ENCODE measurements at regions of chrX and their contacts with region 1.

Region 1: DNA sequence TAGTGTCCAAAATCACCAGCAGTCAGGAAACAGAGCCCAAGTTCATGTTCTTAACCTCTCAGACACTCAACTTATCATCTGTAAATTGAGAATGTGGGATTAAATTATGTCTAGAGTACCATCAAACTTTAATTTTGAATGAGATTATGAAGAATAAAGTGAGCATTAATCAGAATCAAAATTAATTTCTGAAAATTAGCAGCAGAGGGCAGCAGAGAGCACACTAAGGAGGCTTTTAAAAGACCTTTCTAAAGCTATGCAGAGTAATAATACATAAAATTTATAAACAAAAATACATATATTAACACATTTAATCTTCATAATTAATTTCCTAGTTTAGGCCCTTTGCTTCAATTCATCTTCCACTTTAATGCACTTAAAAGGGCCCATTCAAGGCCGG is 7.1 kb downstream of the TASL start:
- DNase-seq: no peak
- H3K4me3 Mint-ChIP-seq: no peak overlapping the region
- H3K27ac Mint-ChIP-seq: no peak overlapping the region
- H3K4me1 Mint-ChIP-seq: peaks cover 19% of the 10 kb centered on the region
- H3K27me3 Mint-ChIP-seq: no peaks in the 10 kb centered on the region

Region 2: GRCh38 chrX:29707088-29707487 is 863.4 kb before region 1 on chrX:
- CTCF ChIA-PET with region 1: no interaction called
- intact Hi-C with region 1: no loop called
- DNase-seq: no peak
- H3K4me3 Mint-ChIP-seq: no peak overlapping the region
- H3K27ac Mint-ChIP-seq: no peak overlapping the region
- H3K4me1 Mint-ChIP-seq: no peaks in the 10 kb centered on the region
- H3K27me3 Mint-ChIP-seq: no peaks in the 10 kb centered on the region

Region 3: DNA sequence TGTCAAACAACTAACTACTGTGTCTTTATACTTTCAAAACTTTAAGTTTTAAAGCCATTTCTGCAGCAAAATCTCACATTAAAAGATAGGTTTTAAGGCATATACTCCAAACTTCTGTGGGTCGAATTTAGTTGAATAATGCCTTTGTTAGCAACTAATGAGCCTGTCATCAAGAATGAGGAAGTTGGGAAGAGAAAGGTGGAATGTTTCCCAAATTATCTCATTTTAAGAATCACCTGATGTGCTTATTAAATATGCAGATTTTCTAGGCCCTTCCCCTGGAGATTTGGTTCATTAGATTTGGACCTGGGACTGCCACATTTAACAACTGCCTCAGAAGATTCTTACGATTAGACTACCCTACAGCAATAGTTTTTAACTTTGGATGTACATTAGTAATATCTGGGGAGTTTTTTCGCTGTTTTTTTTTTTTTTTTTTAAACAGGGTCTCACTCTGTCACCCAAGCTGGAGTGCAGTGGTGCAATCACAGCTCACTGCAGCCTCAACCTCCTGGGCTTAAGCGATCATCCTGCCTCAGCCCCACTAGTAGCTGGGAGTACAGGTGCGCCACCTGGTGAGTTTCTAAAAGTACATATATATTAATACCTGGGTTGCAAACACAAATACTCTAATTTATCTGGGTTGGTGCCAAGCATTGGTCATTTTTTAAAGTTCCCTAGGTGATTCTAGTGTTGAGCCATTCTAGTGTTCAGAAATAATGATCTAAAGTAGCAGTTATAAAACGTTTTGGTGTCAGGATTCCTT is 23.1 kb after region 1 on chrX:
- CTCF ChIA-PET with region 1: interaction called, 35 read pairs
- intact Hi-C with region 1: loop called (anchors 1 kb)
- DNase-seq: peak; percentile 48
- H3K4me3 Mint-ChIP-seq: no peak overlapping the region
- H3K27ac Mint-ChIP-seq: no peak overlapping the region
- H3K4me1 Mint-ChIP-seq: peaks cover 18% of the 10 kb centered on the region
- H3K27me3 Mint-ChIP-seq: no peaks in the 10 kb centered on the region

Region 4: DNA sequence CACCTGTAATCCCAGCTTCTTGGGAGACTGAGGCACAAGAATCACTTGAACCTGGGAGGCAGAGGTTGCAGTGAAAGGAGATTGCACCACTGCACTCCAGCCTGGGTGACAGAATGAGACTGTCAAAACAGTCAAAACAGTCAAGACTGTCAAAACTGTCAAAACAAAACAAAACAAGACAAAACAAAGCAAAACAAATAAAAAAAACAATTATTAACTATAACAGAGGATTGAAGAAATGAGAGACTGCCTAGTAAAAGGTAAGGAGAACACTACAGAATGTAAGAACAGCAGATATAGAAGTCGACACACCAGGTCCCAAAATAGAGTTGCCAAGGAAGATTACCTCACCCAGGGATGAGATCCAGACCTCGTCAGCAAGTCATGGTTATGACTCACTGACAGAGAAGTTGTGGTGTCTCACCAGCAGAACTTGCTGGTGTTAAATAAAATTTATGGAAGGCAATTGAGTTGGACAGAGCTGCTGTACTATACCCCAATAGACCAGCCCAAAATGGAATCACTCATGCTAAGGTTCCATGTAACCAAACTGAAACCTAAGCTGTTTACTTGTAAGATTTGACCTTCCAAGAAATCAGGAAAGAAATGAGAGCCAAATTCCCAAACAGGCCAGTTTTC is 50.6 kb after region 1 on chrX:
- CTCF ChIA-PET with region 1: interaction called, 4 read pairs
- intact Hi-C with region 1: loop called (anchors 1 kb)
- DNase-seq: no peak
- H3K4me3 Mint-ChIP-seq: no peak overlapping the region
- H3K27ac Mint-ChIP-seq: no peak overlapping the region
- H3K4me1 Mint-ChIP-seq: no peaks in the 10 kb centered on the region
- H3K27me3 Mint-ChIP-seq: no peaks in the 10 kb centered on the region

Measured in activated naive CD4-positive, alpha-beta T cell treated with anti-CD3 and anti-CD28 coated beads for 36 hours (primary cell).